ENCODE measurements at regions of chr17 and their contacts with region 1.

Region 1: DNA sequence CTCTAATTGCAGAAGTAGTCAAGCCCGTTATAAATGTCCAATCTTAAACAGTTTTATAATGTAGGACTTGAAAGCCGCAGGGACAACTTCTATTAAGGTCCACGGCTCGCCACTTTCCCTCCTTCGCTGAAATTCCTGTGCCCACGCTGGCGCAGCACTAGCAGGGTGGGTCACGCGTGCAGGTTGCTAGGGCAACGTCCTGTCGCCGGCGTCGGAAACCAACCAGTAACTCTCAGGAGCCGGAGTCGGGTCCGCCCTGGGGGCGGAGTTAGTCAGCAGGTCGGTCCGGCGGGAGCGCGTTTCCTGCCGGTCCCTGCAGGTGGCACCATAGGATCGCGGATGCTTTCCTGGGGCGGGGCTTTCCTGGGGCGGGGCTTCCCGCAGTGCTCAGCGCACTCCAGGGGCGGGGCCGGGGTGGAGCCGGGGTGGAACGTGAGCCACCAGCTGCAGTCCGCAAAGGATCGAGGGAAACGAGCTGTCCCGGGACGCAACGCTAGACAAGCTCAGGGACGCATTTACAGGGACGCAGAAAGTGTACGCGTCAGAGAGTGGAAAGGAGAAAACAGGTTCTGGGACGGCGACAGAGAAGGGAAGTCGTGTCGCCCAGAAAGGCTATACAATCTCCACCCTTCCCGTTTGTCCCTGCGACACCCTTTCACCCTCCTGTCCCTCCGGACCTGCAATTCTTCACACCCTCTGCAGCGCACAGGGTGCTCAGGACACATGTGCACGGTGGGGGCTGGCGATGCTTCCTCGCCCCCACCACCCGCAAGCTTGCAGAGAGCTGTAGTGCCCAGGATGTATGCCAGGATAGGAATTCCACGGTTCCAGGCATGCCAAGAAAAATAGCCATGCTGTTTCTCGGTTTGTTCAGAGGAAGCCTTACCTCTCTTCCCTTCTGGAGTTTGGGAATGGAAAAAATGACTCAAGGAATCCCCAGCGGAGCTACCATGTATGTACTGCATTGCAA is 12.4 kb downstream of the COPZ2 start:
- DNase-seq: peak; percentile 96 to 99 (median 97)
- ATAC-seq: peak; percentile 91
- H3K4me3 ChIP-seq: peak overlapping the region; percentile 57 to 60
- H3K4me3 Mint-ChIP-seq: peak overlapping the region; percentile 84
- H3K27ac ChIP-seq: peak overlapping the region in 1 of 2 experiments; percentile 48
- H3K27ac Mint-ChIP-seq: peak overlapping the region; percentile 83
- H3K4me1 ChIP-seq: peaks cover 35% of the 10 kb centered on the region
- H3K4me1 Mint-ChIP-seq: peaks cover 23% of the 10 kb centered on the region
- H3K27me3 ChIP-seq: peaks cover 6 to 29% of the 10 kb centered on the region in 2 experiments
- H3K27me3 Mint-ChIP-seq: peaks cover 46% of the 10 kb centered on the region
- CTCF ChIP-seq: peak; percentile 70

Region 2: GRCh38 chr17:47840740-47841603 is 184.2 kb before region 1 on chr17 and contains the start of gene SCRN2:
- CTCF ChIA-PET with region 1: no interaction called
- POLR2A ChIA-PET with region 1: no interaction called
- intact Hi-C with region 1: loop called in 1 of 2 experiments (anchors 2 kb)
- DNase-seq: peak; percentile 71 to 93 (median 88)
- ATAC-seq: peak; percentile 91
- H3K4me3 ChIP-seq: peak within 1 kb of the TSS; percentile 86 to 97
- H3K4me3 Mint-ChIP-seq: peak within 1 kb of the TSS; percentile 92
- H3K27ac ChIP-seq: peak within 1 kb of the TSS; percentile 58 to 61
- H3K27ac Mint-ChIP-seq: peak within 1 kb of the TSS; percentile 87
- H3K4me1 ChIP-seq: peaks cover 33% of the 10 kb centered on the region
- H3K4me1 Mint-ChIP-seq: peaks cover 28% of the 10 kb centered on the region
- H3K27me3 ChIP-seq: peaks cover 8 to 12% of the 10 kb centered on the region in 2 experiments
- H3K27me3 Mint-ChIP-seq: peaks cover 24% of the 10 kb centered on the region
- CTCF ChIP-seq: peak; percentile 97
- total RNA-seq, gene SCRN2: 17.6 to 19.8 TPM

Region 3: GRCh38 chr17:47905221-47905781 is 119.9 kb before region 1 on chr17:
- CTCF ChIA-PET with region 1: no interaction called
- POLR2A ChIA-PET with region 1: no interaction called
- intact Hi-C with region 1: no loop called
- DNase-seq: no peak
- ATAC-seq: no peak
- H3K4me3 ChIP-seq: no peak overlapping the region
- H3K4me3 Mint-ChIP-seq: no peak overlapping the region
- H3K27ac ChIP-seq: no peak overlapping the region
- H3K27ac Mint-ChIP-seq: peak overlapping the region; percentile 55
- H3K4me1 ChIP-seq: peaks cover 6% of the 10 kb centered on the region
- H3K4me1 Mint-ChIP-seq: peaks cover 53% of the 10 kb centered on the region
- H3K27me3 ChIP-seq: no peaks in the 10 kb centered on the region
- H3K27me3 Mint-ChIP-seq: no peaks in the 10 kb centered on the region
- CTCF ChIP-seq: no peak

Region 4: DNA sequence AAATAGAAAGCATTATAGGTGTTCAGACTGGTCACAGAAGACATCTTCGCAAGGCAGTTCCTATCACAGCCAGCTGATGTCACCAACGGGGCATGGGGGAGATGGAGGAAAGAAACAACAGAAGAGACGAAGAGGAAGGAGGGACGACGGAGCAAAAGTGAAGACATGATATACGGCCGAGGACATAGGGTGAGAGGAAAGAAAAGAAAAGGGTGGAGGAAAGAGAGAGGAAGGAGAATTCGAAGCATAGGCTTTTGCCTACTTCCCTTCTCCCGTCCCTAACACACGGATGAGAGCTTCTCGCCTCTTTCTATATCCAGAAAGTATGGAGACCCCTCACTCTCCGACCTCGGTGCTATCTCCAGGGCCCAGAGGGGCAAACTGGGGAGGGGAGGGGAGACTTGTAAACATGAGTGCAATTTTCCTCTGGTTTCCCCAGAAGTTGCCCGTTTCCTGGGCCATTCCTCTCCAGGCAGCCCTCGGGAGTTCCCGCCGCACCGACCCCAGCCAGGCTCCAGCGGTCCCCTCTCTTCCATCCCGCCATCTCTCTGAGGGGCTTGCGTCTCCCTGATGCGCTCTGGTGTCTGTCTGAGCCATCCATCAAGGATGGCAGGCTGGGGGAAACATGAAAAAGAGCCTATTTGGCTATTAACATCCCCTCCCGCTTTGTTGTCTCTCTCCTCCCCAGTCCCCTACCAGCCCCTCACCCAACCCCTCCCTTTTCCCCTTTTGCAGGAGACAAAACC is 13.6 kb before region 1 on chr17:
- CTCF ChIA-PET with region 1: interaction called, 12 read pairs
- POLR2A ChIA-PET with region 1: no interaction called
- intact Hi-C with region 1: no loop called
- DNase-seq: peak in 7 of 9 experiments; percentile 9 to 65 (median 50)
- ATAC-seq: peak; percentile 66
- H3K4me3 ChIP-seq: peak overlapping the region in 1 of 2 experiments; percentile 52
- H3K4me3 Mint-ChIP-seq: peak overlapping the region; percentile 70
- H3K27ac ChIP-seq: no peak overlapping the region
- H3K27ac Mint-ChIP-seq: no peak overlapping the region
- H3K4me1 ChIP-seq: peaks cover 16% of the 10 kb centered on the region
- H3K4me1 Mint-ChIP-seq: peaks cover 13% of the 10 kb centered on the region
- H3K27me3 ChIP-seq: peaks cover 3 to 20% of the 10 kb centered on the region in 2 experiments
- H3K27me3 Mint-ChIP-seq: peaks cover 52% of the 10 kb centered on the region
- CTCF ChIP-seq: peak; percentile 60

Region 5: DNA sequence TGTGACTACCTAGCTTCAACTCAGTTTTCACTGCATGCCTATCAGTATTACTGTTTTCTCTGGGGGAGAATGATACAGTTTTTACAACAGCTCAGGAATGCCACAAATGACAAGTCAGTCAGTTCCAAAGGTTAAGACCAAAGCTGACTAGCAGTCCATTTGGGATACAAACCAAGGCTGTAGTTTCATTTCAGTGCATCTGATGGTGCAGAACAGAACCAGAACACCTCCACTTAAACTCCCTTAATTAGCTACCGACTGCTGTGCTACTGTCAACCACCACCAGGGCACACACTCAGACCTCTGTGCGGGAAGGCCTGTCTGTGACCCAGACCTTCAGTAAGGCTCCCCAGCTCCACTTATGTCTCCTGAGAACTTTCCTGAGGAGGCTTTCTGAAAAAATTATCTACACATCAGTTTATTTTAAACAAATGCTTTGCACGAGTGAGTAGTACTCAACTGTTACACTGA is 43.3 kb after region 1 on chr17:
- CTCF ChIA-PET with region 1: interaction called, 253 read pairs
- POLR2A ChIA-PET with region 1: interaction called, 5 read pairs
- intact Hi-C with region 1: no loop called
- DNase-seq: no peak
- ATAC-seq: no peak
- H3K4me3 ChIP-seq: no peak overlapping the region
- H3K4me3 Mint-ChIP-seq: no peak overlapping the region
- H3K27ac ChIP-seq: no peak overlapping the region
- H3K27ac Mint-ChIP-seq: no peak overlapping the region
- H3K4me1 ChIP-seq: no peaks in the 10 kb centered on the region
- H3K4me1 Mint-ChIP-seq: no peaks in the 10 kb centered on the region
- H3K27me3 ChIP-seq: no peaks in the 10 kb centered on the region
- H3K27me3 Mint-ChIP-seq: no peaks in the 10 kb centered on the region
- CTCF ChIP-seq: no peak

Region 6: DNA sequence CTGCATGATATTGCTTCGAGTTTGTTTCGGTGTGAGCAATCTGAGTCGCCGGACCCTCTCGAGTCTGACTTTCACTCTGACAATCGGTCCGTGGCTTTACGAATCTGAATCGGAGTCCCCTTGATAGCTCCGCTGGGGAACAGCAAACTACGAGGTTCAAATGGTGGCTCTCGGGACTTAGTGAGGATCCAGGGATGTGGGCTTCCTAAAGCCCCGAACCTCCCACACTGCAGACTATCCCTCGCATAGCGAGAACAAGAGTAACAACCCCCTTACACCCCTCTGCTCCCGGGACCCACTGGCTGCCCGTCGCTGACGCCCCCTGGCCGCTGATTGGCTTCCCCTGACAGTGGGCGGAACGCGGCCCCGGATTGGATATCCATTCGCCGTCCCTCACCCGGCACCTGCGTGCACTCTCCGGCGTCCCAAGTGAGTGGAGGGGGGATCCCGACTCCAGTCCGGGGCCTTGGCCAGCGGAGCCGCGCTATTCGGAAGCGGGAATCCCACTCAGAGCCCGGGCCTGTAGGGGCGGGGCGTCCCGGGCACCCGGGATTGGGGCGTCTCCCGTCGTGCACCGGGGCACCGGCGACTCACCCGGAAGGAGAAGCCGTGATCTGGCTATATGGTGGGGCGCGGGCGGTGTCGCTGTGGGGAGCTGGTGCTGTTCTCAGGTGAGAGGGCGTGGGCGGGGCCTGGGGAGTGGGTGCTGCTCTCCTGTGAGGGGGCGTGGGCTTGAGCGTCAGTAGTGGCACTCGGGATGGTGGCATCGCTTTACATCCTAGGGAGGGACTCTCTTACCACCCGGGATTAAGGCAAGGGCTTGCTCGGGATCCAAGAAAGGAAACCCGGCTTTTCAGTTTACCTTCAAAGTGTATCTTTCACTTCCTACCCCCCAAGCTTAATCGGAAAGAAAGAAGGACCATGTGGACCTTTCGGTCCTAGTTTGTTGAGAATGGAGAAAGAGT is 82.2 kb after region 1 on chr17 and contains the start of gene SNX11:
- CTCF ChIA-PET with region 1: interaction called, 10 read pairs
- POLR2A ChIA-PET with region 1: no interaction called
- intact Hi-C with region 1: loop called in 1 of 2 experiments (anchors 1 kb)
- DNase-seq: peak; percentile 80 to 97 (median 92)
- ATAC-seq: peak; percentile 93
- H3K4me3 ChIP-seq: peak within 1 kb of the TSS; percentile 70 to 91
- H3K4me3 Mint-ChIP-seq: peak within 1 kb of the TSS; percentile 98
- H3K27ac ChIP-seq: peak within 1 kb of the TSS; percentile 78 to 82
- H3K27ac Mint-ChIP-seq: peak within 1 kb of the TSS; percentile 88
- H3K4me1 ChIP-seq: peaks cover 37% of the 10 kb centered on the region
- H3K4me1 Mint-ChIP-seq: peaks cover 60% of the 10 kb centered on the region
- H3K27me3 ChIP-seq: no peaks in the 10 kb centered on the region
- H3K27me3 Mint-ChIP-seq: no peaks in the 10 kb centered on the region
- CTCF ChIP-seq: no peak
- total RNA-seq, gene SNX11: 15.3 to 16.3 TPM

Region 7: GRCh38 chr17:48457080-48457836 is 432.0 kb after region 1 on chr17:
- CTCF ChIA-PET with region 1: no interaction called
- POLR2A ChIA-PET with region 1: no interaction called
- intact Hi-C with region 1: loop called in 1 of 2 experiments (anchors 1 kb)
- DNase-seq: peak; percentile 49 to 90 (median 75)
- ATAC-seq: peak; percentile 85
- H3K4me3 ChIP-seq: peak overlapping the region; percentile 21 to 28
- H3K4me3 Mint-ChIP-seq: peak overlapping the region; percentile 73
- H3K27ac ChIP-seq: no peak overlapping the region
- H3K27ac Mint-ChIP-seq: peak overlapping the region; percentile 22
- H3K4me1 ChIP-seq: peaks cover 53% of the 10 kb centered on the region
- H3K4me1 Mint-ChIP-seq: peaks cover 52% of the 10 kb centered on the region
- H3K27me3 ChIP-seq: no peaks in the 10 kb centered on the region
- H3K27me3 Mint-ChIP-seq: no peaks in the 10 kb centered on the region
- CTCF ChIP-seq: peak; percentile 94

Region 8: GRCh38 chr17:48678141-48678971 is 653.1 kb after region 1 on chr17:
- CTCF ChIA-PET with region 1: no interaction called
- POLR2A ChIA-PET with region 1: no interaction called
- intact Hi-C with region 1: no loop called
- DNase-seq: peak; percentile 48 to 83 (median 64)
- ATAC-seq: peak; percentile 94
- H3K4me3 ChIP-seq: no peak overlapping the region
- H3K4me3 Mint-ChIP-seq: no peak overlapping the region
- H3K27ac ChIP-seq: no peak overlapping the region
- H3K27ac Mint-ChIP-seq: no peak overlapping the region
- H3K4me1 ChIP-seq: peaks cover 4% of the 10 kb centered on the region
- H3K4me1 Mint-ChIP-seq: no peaks in the 10 kb centered on the region
- H3K27me3 ChIP-seq: peaks cover 0 to 11% of the 10 kb centered on the region in 2 experiments
- H3K27me3 Mint-ChIP-seq: peaks cover 47% of the 10 kb centered on the region
- CTCF ChIP-seq: peak; percentile 81